ENCODE measurements at regions of chr6 and their contacts with region 1.

Region 1: GRCh38 chr6:30678964-30679726 is 6.3 kb upstream of the DHX16 start:
- DNase-seq: peak; percentile 92
- ATAC-seq: peak; percentile 29
- H3K4me3 ChIP-seq: peak overlapping the region in 4 of 5 experiments; percentile 31 to 100 (median 37)
- H3K4me3 Mint-ChIP-seq: peak overlapping the region; percentile 65
- H3K27ac ChIP-seq: peak overlapping the region in 1 of 2 donors; percentile 97
- H3K27ac Mint-ChIP-seq: peak overlapping the region; percentile 99
- H3K4me1 ChIP-seq: peaks cover 38 to 39% of the 10 kb centered on the region in 2 donors
- H3K4me1 Mint-ChIP-seq: peaks cover 51% of the 10 kb centered on the region
- H3K27me3 ChIP-seq: no peaks in the 10 kb centered on the region
- H3K27me3 Mint-ChIP-seq: no peaks in the 10 kb centered on the region
- CTCF ChIP-seq: peak; percentile 94

Region 2: DNA sequence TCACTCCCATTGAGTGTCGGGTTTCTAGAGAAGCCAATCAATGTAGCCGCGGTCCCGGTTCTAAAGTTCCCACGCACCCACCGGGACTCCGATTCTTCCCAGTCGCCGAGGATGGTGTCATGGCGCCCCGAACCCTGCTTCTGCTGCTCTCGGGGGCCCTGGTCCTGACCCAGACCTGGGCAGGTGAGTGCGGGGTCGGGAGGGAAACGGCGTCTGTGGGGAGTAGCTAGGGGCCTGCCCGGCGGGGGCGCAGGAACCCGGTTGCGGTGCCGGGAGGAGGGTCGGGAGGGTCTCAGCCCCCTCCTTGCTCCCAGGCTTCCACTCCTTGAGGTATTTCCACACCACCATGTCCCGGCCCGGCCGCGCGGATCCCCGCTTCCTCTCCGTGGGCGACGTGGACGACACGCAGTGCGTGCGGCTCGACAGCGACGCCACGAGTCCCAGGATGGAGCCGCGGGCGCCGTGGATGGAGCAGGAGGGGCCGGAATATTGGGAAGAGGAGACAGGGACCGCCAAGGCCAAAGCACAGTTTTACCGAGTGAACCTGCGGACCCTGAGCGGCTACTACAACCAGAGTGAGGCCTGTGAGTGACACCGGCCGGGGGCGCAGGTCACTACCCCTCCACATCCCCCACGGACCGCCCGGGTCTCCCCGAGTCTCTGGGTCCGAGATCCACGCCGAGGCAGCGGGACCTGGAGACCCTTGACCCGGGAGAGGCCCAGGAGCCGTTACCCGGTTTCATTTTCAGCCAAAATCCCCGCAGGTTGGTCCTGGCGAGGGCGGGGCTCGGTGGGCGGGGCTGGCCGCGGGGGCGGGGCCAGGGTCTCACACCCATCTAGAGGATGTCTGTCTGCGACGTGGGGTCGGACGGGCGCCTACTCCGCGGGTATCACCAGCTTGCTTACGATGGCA is 886.8 kb before region 1 on chr6:
- CTCF ChIA-PET with region 1: no interaction called
- POLR2A ChIA-PET with region 1: interaction called, 12 read pairs
- intact Hi-C with region 1: no loop called
- DNase-seq: peak; percentile 84
- ATAC-seq: peak; percentile 89
- H3K4me3 ChIP-seq: peak overlapping the region; percentile 30 to 89 (median 85)
- H3K4me3 Mint-ChIP-seq: peak overlapping the region; percentile 91
- H3K27ac ChIP-seq: peak overlapping the region; percentile 56 to 90
- H3K27ac Mint-ChIP-seq: peak overlapping the region; percentile 80
- H3K4me1 ChIP-seq: peaks cover 5 to 16% of the 10 kb centered on the region in 2 donors
- H3K4me1 Mint-ChIP-seq: peaks cover 19% of the 10 kb centered on the region
- H3K27me3 ChIP-seq: peaks cover 0 to 30% (median 19%) of the 10 kb centered on the region in 4 experiments
- H3K27me3 Mint-ChIP-seq: peaks cover 41% of the 10 kb centered on the region
- CTCF ChIP-seq: no peak

Region 3: GRCh38 chr6:30703821-30704360 is 24.7 kb after region 1 on chr6:
- CTCF ChIA-PET with region 1: interaction called, 15 read pairs
- POLR2A ChIA-PET with region 1: interaction called, 4 read pairs
- intact Hi-C with region 1: no loop called
- DNase-seq: no peak
- ATAC-seq: no peak
- H3K4me3 ChIP-seq: no peak overlapping the region
- H3K4me3 Mint-ChIP-seq: no peak overlapping the region
- H3K27ac ChIP-seq: no peak overlapping the region
- H3K27ac Mint-ChIP-seq: no peak overlapping the region
- H3K4me1 ChIP-seq: no peaks in the 10 kb centered on the region
- H3K4me1 Mint-ChIP-seq: no peaks in the 10 kb centered on the region
- H3K27me3 ChIP-seq: no peaks in the 10 kb centered on the region
- H3K27me3 Mint-ChIP-seq: no peaks in the 10 kb centered on the region
- CTCF ChIP-seq: no peak

Region 4: DNA sequence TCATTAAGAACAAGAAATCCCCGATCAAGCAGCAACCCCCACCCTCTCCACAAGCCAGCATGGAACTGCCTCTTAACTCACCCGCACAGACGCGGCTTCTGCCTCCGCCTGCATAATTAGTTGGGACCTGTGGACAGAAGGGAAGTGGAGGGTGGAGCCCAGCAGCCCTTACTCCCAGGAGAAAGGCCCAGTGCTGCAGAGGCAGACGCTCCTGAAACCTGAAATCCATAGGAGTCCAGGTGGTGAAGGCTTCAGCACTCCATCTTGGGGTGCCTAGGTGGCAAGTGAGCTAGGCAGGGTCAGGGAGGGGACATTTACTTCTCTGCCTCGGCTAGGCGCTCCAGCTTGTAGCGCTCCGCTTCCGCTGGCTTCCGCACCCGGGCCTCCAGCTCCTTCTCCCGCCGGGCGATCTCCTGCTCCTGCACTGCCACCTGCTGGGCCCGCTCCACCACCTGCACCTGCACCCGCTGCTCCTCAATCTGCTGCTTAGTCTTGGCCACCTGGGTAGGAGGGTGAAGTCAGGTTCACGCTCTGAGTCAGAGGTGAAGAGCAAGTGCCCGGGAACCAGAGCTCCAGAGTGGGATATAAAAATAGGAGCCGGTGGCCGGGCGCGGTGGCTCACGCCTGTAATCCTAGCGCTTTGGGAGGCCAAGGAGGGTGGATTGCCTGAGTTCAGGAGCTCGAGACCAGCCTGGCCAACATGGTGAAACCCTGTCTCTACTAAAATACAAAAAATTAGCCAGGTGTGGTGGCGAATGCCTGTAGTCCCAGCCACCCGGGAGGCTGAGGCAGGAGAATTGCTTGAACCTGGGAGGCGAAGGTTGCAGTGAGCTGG is 51.7 kb after region 1 on chr6:
- CTCF ChIA-PET with region 1: interaction called, 963 read pairs
- POLR2A ChIA-PET with region 1: interaction called, 14 read pairs
- intact Hi-C with region 1: no loop called
- DNase-seq: peak; percentile 86
- ATAC-seq: peak; percentile 89
- H3K4me3 ChIP-seq: peak overlapping the region in 3 of 5 experiments; percentile 5 to 29 (median 25)
- H3K4me3 Mint-ChIP-seq: peak overlapping the region; percentile 40
- H3K27ac ChIP-seq: no peak overlapping the region
- H3K27ac Mint-ChIP-seq: peak overlapping the region; percentile 42
- H3K4me1 ChIP-seq: peaks cover 22 to 23% of the 10 kb centered on the region in 2 donors
- H3K4me1 Mint-ChIP-seq: peaks cover 25% of the 10 kb centered on the region
- H3K27me3 ChIP-seq: no peaks in the 10 kb centered on the region
- H3K27me3 Mint-ChIP-seq: no peaks in the 10 kb centered on the region
- CTCF ChIP-seq: peak; percentile 77

Region 5: GRCh38 chr6:31087494-31088089 is 408.4 kb after region 1 on chr6:
- CTCF ChIA-PET with region 1: interaction called, 11 read pairs
- POLR2A ChIA-PET with region 1: no interaction called
- intact Hi-C with region 1: no loop called
- DNase-seq: peak; percentile 89
- ATAC-seq: peak; percentile 95
- H3K4me3 ChIP-seq: no peak overlapping the region
- H3K4me3 Mint-ChIP-seq: no peak overlapping the region
- H3K27ac ChIP-seq: no peak overlapping the region
- H3K27ac Mint-ChIP-seq: no peak overlapping the region
- H3K4me1 ChIP-seq: no peaks in the 10 kb centered on the region
- H3K4me1 Mint-ChIP-seq: no peaks in the 10 kb centered on the region
- H3K27me3 ChIP-seq: no peaks in the 10 kb centered on the region
- H3K27me3 Mint-ChIP-seq: peaks cover 21% of the 10 kb centered on the region
- CTCF ChIP-seq: peak; percentile 84